ENCODE measurements at regions of chr2 and their contacts with region 1.

Region 1: DNA sequence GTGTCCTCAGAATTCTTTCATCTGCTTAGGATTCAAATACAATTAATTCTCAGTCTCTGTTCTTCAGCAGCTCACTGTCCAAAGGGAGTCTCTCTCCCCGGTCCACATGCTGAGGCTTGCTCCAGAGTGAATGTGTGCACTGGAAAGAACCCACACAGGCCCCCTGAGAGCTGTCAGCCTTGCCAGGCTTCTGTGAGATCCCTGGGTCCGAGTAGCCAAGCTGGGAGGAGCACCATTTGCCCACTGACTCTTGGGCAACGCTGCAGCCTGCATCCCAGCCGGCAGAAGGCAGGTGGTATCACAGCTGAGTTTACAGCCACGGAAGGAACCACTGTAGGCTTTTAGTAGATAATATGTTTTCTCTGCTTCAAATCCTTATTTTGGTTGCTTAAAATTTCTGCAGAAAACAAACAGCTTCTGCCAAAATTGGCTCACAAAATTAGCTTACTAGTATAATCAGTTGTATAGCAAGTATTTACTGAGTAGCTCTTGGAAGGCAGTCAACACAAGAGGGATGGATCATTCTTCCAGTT is 21.4 kb upstream of the LTBP1 start:
- DNase-seq: no peak
- ATAC-seq: no peak
- H3K4me3 ChIP-seq: no peak overlapping the region
- H3K27ac ChIP-seq: no peak overlapping the region
- H3K4me1 ChIP-seq: no peaks in the 10 kb centered on the region
- H3K27me3 ChIP-seq: no peaks in the 10 kb centered on the region
- CTCF ChIP-seq: no peak

Region 2: DNA sequence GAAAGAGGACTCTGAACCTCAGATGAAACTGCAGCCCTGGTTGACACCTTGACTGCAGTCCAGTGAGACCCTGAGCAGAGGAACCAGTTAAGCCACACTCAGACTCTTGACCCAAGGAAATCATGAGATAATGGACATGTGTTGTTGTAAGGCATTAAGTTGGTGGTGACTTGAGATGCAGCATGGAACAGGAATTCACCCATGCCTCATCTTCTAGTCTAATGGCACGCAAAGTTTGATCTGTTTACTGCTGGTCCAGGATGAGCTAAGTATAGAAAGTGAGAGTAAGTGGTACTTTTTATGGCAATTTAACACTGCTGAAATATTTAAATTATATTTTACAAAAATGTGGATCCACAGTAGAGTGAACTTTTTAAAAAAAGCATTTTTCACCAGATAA is 29.9 kb before region 1 on chr2:
- CTCF ChIA-PET with region 1: no interaction called
- POLR2A ChIA-PET with region 1: no interaction called
- intact Hi-C with region 1: no loop called
- DNase-seq: no peak
- ATAC-seq: no peak
- H3K4me3 ChIP-seq: no peak overlapping the region
- H3K27ac ChIP-seq: no peak overlapping the region
- H3K4me1 ChIP-seq: no peaks in the 10 kb centered on the region
- H3K27me3 ChIP-seq: no peaks in the 10 kb centered on the region
- CTCF ChIP-seq: no peak

Region 3: DNA sequence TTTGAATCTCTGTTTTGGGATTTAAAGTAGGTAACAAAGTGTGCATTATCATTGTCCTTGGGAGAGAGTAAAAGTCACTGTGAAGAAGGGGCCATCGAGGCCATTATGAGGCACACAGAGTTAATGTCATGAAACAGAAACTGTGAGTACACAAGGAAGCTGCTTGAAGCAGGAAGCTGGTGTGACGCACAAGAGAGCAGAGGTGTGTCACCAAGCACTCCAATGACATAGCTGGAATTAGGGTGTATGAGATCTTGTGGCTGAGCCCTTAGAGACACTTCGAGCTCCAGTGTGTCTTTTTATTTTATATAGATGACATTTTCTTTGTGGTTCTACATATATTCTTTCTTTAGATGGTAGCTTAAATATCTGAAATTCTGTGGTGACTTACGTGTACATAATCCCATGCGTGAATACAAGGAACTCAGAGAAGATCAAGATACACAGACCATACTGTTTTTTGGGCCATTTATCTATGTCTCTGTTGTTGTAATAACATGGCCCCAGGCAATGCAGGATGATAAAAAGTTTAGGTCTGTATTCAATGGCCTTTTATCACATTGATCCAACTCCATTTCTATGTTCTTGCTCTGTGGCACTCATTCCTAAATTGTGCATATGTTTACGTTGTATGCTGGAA is 838.4 kb after region 1 on chr2:
- CTCF ChIA-PET with region 1: no interaction called
- POLR2A ChIA-PET with region 1: interaction called, 10 read pairs
- intact Hi-C with region 1: no loop called
- DNase-seq: peak; percentile 5
- ATAC-seq: no peak
- H3K4me3 ChIP-seq: no peak overlapping the region
- H3K27ac ChIP-seq: no peak overlapping the region
- H3K4me1 ChIP-seq: no peaks in the 10 kb centered on the region
- H3K27me3 ChIP-seq: peaks cover 4% of the 10 kb centered on the region
- CTCF ChIP-seq: no peak